ENCODE measurements at regions of chr4 and their contacts with region 1.

Region 1: DNA sequence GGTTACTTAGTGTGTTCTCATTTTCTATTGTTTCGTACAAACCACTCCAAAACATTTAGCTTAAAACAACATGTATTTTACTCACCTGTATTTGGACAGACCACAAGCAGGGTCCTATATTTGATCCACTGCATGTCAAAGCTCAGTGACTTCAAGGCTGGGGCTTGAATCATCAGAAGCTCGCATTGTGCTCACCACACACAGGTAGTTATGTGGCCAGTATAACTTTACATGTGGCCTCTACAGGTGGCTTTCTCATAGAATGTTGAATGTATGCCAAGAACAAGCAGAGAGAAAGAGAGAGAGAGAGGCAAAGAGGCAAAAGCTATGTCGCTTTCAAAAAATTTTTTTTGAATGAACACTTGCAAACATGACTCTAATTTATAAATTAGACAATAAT is 107.6 kb downstream of the QRFPR start:
- DNase-seq: no peak
- H3K4me3 ChIP-seq: no peak overlapping the region
- H3K27ac ChIP-seq: no peak overlapping the region
- H3K4me1 ChIP-seq: peaks cover 0 to 6% (median 0%) of the 10 kb centered on the region in 4 experiments
- H3K27me3 ChIP-seq: no peaks in the 10 kb centered on the region

Region 2: DNA sequence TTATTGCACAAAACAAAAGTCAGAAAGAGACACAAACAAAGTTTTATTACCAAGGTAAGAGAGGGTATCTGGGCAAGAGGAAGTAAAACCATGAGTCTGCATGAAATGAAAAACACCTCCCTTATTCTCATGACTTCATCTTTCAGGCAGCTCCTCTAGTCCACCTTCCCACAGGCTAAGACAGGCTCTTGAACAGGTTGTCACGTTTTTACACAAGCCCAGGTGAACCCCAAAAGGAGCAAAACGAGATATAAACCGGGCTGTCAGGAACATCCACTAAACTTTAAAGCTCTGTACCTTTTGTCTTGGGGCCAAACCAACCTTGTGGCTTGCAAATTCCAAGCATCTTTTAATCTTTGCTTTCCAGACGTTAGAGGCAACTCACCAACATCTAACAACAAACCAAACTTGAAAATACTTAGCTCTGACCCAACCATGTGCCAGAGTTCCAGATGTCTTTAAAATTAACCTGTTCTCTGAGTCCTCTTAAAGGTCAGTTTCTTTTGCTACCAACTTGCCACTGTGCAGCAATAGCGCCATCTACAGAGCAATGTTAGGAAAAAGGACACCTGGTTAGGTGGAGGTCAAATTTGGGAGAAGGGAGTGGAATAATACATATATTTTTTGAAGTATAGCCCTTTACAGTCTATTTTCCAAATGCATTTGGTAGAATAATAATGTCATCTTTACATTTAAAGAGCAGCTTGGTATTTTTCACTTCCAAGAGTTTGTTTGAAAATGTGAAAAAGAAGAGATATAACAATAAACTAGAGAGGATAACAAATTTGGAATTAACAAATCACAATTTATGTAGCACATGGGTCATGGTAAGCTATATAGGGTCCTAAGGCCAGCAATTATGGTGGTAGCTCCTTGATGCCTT is 34.5 kb after region 1 on chr4:
- CTCF ChIA-PET with region 1: interaction called, 11 read pairs
- POLR2A ChIA-PET with region 1: no interaction called
- DNase-seq: peak; percentile 45 to 77 (median 68)
- H3K4me3 ChIP-seq: peak overlapping the region in 1 of 7 experiments; percentile 18
- H3K27ac ChIP-seq: no peak overlapping the region
- H3K4me1 ChIP-seq: peaks cover 7 to 23% (median 18%) of the 10 kb centered on the region in 4 experiments
- H3K27me3 ChIP-seq: no peaks in the 10 kb centered on the region

Region 3: GRCh38 chr4:121421594-121421993 is 148.4 kb after region 1 on chr4:
- CTCF ChIA-PET with region 1: no interaction called
- POLR2A ChIA-PET with region 1: no interaction called
- DNase-seq: no peak
- H3K4me3 ChIP-seq: no peak overlapping the region
- H3K27ac ChIP-seq: no peak overlapping the region
- H3K4me1 ChIP-seq: no peaks in the 10 kb centered on the region
- H3K27me3 ChIP-seq: peaks cover 0 to 1% (median 0%) of the 10 kb centered on the region in 5 experiments

Measured in common myeloid progenitor, CD34-positive (primary cell).